CD14-positive monocyte (primary cell): ENCODE measurements at regions of chr6 and their contacts with region 1.

Region 1: DNA sequence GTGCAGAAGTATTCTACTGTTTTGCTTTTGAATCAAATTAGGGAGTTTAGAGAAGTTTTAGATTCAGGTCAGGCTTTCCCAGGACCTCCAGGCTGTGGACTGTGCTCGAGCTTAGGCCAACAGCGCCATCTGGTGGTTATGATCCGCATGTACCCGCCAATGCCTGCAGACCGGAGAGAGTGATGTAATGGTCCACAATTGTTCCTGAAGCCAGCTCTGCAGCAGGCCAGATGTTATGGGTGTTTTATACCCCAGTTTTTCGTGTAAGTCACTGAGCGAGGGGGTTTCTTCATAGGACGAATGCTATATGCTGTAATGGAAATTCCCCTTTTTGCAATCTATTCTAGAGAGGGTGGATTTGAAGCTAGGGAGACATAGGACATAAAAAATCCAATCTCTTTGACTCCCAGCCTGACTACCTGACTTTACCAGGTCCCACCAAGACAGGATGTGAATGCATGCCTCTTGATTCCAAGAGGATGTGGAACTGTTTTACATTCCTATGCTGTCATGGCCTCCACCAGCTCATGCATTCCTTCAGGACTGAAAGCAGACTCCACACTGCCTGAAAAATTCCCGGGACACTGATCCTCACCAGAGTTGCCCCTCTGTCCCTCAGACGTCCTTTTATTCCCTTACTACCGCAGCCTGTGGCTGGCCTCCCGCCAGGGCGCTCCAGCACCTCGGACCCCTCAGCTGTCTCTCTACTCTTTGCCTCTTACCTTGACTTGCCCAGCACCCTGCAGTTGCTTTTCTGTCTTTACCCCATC is 41.2 kb upstream of the LY86 start:
- DNase-seq: peak; percentile 79 to 84 (median 82)
- H3K4me3 ChIP-seq: peak overlapping the region; percentile 44 to 75 (median 51)
- H3K4me3 Mint-ChIP-seq: peak overlapping the region; percentile 82 to 94
- H3K27ac ChIP-seq: no peak overlapping the region
- H3K27ac Mint-ChIP-seq: peak overlapping the region in 3 of 7 donors; percentile 28 to 73 (median 33)
- H3K4me1 ChIP-seq: peaks cover 13 to 14% of the 10 kb centered on the region in 2 donors
- H3K4me1 Mint-ChIP-seq: peaks cover 16% of the 10 kb centered on the region
- H3K27me3 ChIP-seq: peaks cover 10 to 34% of the 10 kb centered on the region in 2 donors
- H3K27me3 Mint-ChIP-seq: peaks cover 31 to 40% (median 38%) of the 10 kb centered on the region in 3 donors
- CTCF ChIP-seq: peak; percentile 86

Region 2: DNA sequence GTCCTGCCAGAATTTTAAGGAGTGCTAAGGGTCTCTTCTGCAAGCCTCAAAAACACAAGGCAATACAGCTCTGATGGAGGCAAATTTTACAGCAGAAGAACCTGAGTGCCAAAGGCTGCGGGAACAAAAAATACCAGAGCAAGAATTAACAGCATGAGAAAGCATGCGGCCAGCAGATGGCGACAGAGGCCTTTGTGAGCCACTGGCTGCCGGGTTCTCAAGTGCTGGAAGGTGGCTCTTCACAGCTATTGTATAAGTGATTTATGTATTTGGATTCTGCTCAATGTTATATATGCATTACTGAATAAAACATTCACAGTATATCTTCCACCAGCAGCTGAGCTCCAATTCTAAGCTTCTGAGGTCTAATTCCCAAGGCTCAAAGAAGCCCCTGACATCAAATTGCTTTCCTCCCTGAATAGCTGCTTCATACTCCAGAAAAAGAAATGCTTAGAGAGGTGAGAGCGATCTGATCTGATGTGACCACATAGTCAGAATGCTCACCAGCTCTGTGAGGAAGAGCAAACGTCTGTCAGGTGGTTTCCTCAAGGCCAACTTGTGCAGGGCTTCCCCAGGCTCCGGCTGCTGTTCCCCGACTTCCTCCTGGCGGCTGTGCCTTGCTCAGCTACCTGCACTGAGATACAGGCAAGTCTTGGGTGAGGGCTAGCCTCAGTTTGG is 1403.5 kb before region 1 on chr6:
- intact Hi-C with region 1: loop called in 1 of 2 experiments (anchors 5 kb)
- DNase-seq: peak; percentile 51 to 70 (median 67)
- H3K4me3 ChIP-seq: no peak overlapping the region
- H3K4me3 Mint-ChIP-seq: no peak overlapping the region
- H3K27ac ChIP-seq: no peak overlapping the region
- H3K27ac Mint-ChIP-seq: peak overlapping the region in 3 of 7 donors; percentile 15 to 62 (median 46)
- H3K4me1 ChIP-seq: no peaks in the 10 kb centered on the region
- H3K4me1 Mint-ChIP-seq: peaks cover 9% of the 10 kb centered on the region
- H3K27me3 ChIP-seq: no peaks in the 10 kb centered on the region
- H3K27me3 Mint-ChIP-seq: no peaks in the 10 kb centered on the region
- CTCF ChIP-seq: peak; percentile 86

Region 3: GRCh38 chr6:5471044-5471443 is 1076.3 kb before region 1 on chr6:
- intact Hi-C with region 1: loop called (anchors 10 kb)
- DNase-seq: peak; percentile 27 to 49 (median 39)
- H3K4me3 ChIP-seq: no peak overlapping the region
- H3K4me3 Mint-ChIP-seq: no peak overlapping the region
- H3K27ac ChIP-seq: no peak overlapping the region
- H3K27ac Mint-ChIP-seq: no peak overlapping the region
- H3K4me1 ChIP-seq: no peaks in the 10 kb centered on the region
- H3K4me1 Mint-ChIP-seq: peaks cover 3% of the 10 kb centered on the region
- H3K27me3 ChIP-seq: no peaks in the 10 kb centered on the region
- H3K27me3 Mint-ChIP-seq: no peaks in the 10 kb centered on the region
- CTCF ChIP-seq: peak; percentile 91

Region 4: GRCh38 chr6:6057424-6058053 is 489.8 kb before region 1 on chr6:
- intact Hi-C with region 1: loop called (anchors 5 kb)
- DNase-seq: peak; percentile 30 to 55 (median 43)
- H3K4me3 ChIP-seq: no peak overlapping the region
- H3K4me3 Mint-ChIP-seq: no peak overlapping the region
- H3K27ac ChIP-seq: no peak overlapping the region
- H3K27ac Mint-ChIP-seq: no peak overlapping the region
- H3K4me1 ChIP-seq: no peaks in the 10 kb centered on the region
- H3K4me1 Mint-ChIP-seq: no peaks in the 10 kb centered on the region
- H3K27me3 ChIP-seq: peaks cover 8 to 9% of the 10 kb centered on the region in 2 donors
- H3K27me3 Mint-ChIP-seq: peaks cover 16 to 42% (median 28%) of the 10 kb centered on the region in 3 donors
- CTCF ChIP-seq: peak; percentile 74